CD8-positive, alpha-beta memory T cell (primary cell): ENCODE measurements at regions of chr21 and their contacts with region 1.

Region 1: GRCh38 chr21:28745131-28746016 is 247.3 kb downstream of the LTN1 start:
- DNase-seq: peak; percentile 42 to 77 (median 53)
- H3K4me3 ChIP-seq: peak overlapping the region; percentile 38
- H3K4me3 Mint-ChIP-seq: no peak overlapping the region
- H3K27ac ChIP-seq: no peak overlapping the region
- H3K27ac Mint-ChIP-seq: no peak overlapping the region
- H3K4me1 ChIP-seq: peaks cover 4% of the 10 kb centered on the region
- H3K4me1 Mint-ChIP-seq: no peaks in the 10 kb centered on the region
- H3K27me3 ChIP-seq: no peaks in the 10 kb centered on the region
- H3K27me3 Mint-ChIP-seq: no peaks in the 10 kb centered on the region

Region 2: GRCh38 chr21:28516991-28517592 is 228.3 kb before region 1 on chr21:
- CTCF ChIA-PET with region 1: interaction called, 55 read pairs
- POLR2A ChIA-PET with region 1: no interaction called
- DNase-seq: peak; percentile 33 to 68 (median 43)
- H3K4me3 ChIP-seq: no peak overlapping the region
- H3K4me3 Mint-ChIP-seq: no peak overlapping the region
- H3K27ac ChIP-seq: no peak overlapping the region
- H3K27ac Mint-ChIP-seq: no peak overlapping the region
- H3K4me1 ChIP-seq: no peaks in the 10 kb centered on the region
- H3K4me1 Mint-ChIP-seq: peaks cover 4 to 6% (median 5%) of the 10 kb centered on the region in 3 donors
- H3K27me3 ChIP-seq: no peaks in the 10 kb centered on the region
- H3K27me3 Mint-ChIP-seq: peaks cover 0 to 3% of the 10 kb centered on the region in 2 donors

Region 3: DNA sequence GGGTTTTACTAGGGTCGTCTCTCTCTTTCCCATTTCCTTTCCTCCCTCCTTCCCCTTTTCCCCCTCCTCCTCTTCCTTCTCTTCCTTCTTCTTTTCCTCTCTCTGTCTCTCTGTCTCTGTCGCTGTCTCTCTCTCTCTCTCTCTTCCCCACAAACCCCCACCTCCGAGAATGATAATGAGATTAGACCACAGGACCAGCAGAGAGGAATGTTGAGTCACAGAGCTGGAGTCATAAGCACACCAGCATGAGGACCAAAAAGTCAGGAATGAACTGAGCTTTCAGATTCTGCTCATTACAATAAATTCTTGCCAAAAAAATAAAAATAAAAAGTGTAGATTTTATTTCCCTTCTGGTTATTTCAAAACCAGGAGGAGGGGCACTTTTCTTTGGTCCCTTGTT is 130.1 kb before region 1 on chr21:
- CTCF ChIA-PET with region 1: no interaction called
- POLR2A ChIA-PET with region 1: no interaction called
- DNase-seq: no peak
- H3K4me3 ChIP-seq: no peak overlapping the region
- H3K4me3 Mint-ChIP-seq: no peak overlapping the region
- H3K27ac ChIP-seq: no peak overlapping the region
- H3K27ac Mint-ChIP-seq: no peak overlapping the region
- H3K4me1 ChIP-seq: no peaks in the 10 kb centered on the region
- H3K4me1 Mint-ChIP-seq: peaks cover 6 to 29% (median 14%) of the 10 kb centered on the region in 3 donors
- H3K27me3 ChIP-seq: no peaks in the 10 kb centered on the region
- H3K27me3 Mint-ChIP-seq: no peaks in the 10 kb centered on the region

Region 4: DNA sequence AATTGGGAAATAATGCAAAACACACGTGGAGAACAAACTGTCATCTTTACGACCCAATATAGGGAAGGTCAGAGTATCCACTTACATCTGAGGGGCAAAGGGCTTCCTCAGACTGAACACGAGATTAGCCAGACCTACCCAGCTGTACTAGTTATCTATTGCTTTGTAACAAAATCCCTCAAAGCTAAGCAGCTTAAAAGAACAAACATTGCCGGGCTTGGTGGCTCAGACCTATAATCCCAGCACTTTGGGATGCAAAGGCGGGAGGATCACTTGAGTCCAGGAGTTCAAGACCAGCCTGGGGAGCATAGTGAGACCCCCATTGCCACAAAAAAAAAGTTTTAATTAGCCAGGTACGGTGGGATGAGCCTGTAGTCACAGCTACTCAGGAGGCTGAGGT is 15.5 kb before region 1 on chr21:
- CTCF ChIA-PET with region 1: interaction called, 37 read pairs
- POLR2A ChIA-PET with region 1: no interaction called
- DNase-seq: no peak
- H3K4me3 ChIP-seq: no peak overlapping the region
- H3K4me3 Mint-ChIP-seq: no peak overlapping the region
- H3K27ac ChIP-seq: no peak overlapping the region
- H3K27ac Mint-ChIP-seq: no peak overlapping the region
- H3K4me1 ChIP-seq: no peaks in the 10 kb centered on the region
- H3K4me1 Mint-ChIP-seq: peaks cover 0 to 9% (median 2%) of the 10 kb centered on the region in 3 donors
- H3K27me3 ChIP-seq: no peaks in the 10 kb centered on the region
- H3K27me3 Mint-ChIP-seq: no peaks in the 10 kb centered on the region